Stomach (tissue), 19 donors: ENCODE measurements at regions of chr1 and their contacts with region 1.

Region 1: GRCh38 chr1:111320106-111320879 is 29.6 kb downstream of the CHIA start:
- DNase-seq: no peak
- H3K4me3 ChIP-seq: no peak overlapping the region
- H3K27ac ChIP-seq: no peak overlapping the region
- H3K4me1 ChIP-seq: no peaks in the 10 kb centered on the region
- H3K27me3 ChIP-seq: no peaks in the 10 kb centered on the region
- CTCF ChIP-seq: no peak
- EP300 ChIP-seq: no peak
- POLR2A ChIP-seq: no peak

Region 2: GRCh38 chr1:111242805-111243523 is 77.3 kb before region 1 on chr1:
- intact Hi-C with region 1: loop called (anchors 10 kb)
- DNase-seq: no peak
- H3K4me3 ChIP-seq: no peak overlapping the region
- H3K27ac ChIP-seq: no peak overlapping the region
- H3K4me1 ChIP-seq: no peaks in the 10 kb centered on the region
- H3K27me3 ChIP-seq: no peaks in the 10 kb centered on the region
- CTCF ChIP-seq: no peak
- EP300 ChIP-seq: no peak
- POLR2A ChIP-seq: no peak

Region 3: GRCh38 chr1:111372336-111372965 is 52.2 kb after region 1 on chr1:
- intact Hi-C with region 1: no loop called
- DNase-seq: no peak
- H3K4me3 ChIP-seq: no peak overlapping the region
- H3K27ac ChIP-seq: no peak overlapping the region
- H3K4me1 ChIP-seq: no peaks in the 10 kb centered on the region
- H3K27me3 ChIP-seq: peaks cover 0 to 14% (median 0%) of the 10 kb centered on the region in 3 donors
- CTCF ChIP-seq: no peak
- EP300 ChIP-seq: no peak
- POLR2A ChIP-seq: no peak

Region 4: GRCh38 chr1:111463029-111463683 is 142.9 kb after region 1 on chr1:
- intact Hi-C with region 1: no loop called
- DNase-seq: peak in 1 of 2 donors; percentile 60
- H3K4me3 ChIP-seq: no peak overlapping the region
- H3K27ac ChIP-seq: no peak overlapping the region
- H3K4me1 ChIP-seq: peaks cover 0 to 9% (median 0%) of the 10 kb centered on the region in 4 donors
- H3K27me3 ChIP-seq: no peaks in the 10 kb centered on the region
- CTCF ChIP-seq: no peak
- EP300 ChIP-seq: no peak
- POLR2A ChIP-seq: no peak

Region 5: DNA sequence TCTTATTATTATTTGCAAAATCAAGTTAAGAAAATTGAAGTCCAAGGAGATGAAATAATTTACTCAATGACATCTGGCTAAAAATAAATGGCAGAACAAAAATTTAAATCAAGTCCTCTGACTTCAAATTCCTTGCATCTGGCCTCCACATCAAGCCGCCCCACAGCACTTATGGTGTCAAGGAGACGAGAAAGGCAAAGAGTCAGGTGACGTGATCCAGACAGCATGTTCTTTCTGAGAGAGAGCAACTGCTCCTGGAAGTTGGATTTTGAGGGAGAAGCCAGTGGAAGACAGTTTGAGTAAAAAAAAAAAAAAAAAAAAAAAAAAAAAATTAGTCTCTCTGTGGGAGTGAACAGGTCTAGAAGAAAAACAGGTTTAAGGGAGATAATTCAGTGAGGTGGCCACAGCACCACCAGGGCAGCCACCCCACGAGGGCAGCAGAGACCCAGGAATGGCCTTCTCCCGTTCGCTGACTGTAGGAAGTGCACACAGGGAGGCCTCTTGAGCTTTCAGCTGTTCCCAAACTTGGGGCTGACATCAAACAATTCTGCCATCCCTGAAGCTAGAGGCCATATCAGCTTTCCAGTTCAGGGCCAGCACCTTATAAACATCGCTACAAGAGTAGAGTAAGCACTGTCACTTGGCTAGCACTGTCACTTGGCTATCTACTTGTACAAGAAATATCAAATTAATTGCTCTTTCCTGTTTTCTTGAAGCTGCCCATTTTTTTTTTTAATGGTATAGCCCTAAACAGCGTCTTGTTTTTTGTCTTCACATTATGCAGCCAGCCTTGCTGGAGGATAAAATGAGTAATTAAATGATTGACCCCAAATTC is 161.3 kb after region 1 on chr1:
- intact Hi-C with region 1: no loop called
- DNase-seq: peak; percentile 77 to 94
- H3K4me3 ChIP-seq: no peak overlapping the region
- H3K27ac ChIP-seq: no peak overlapping the region
- H3K4me1 ChIP-seq: peaks cover 0 to 39% (median 8%) of the 10 kb centered on the region in 4 donors
- H3K27me3 ChIP-seq: no peaks in the 10 kb centered on the region
- CTCF ChIP-seq: peak in 5 of 7 experiments; percentile 51 to 74 (median 64)
- EP300 ChIP-seq: no peak
- POLR2A ChIP-seq: no peak

Region 6: DNA sequence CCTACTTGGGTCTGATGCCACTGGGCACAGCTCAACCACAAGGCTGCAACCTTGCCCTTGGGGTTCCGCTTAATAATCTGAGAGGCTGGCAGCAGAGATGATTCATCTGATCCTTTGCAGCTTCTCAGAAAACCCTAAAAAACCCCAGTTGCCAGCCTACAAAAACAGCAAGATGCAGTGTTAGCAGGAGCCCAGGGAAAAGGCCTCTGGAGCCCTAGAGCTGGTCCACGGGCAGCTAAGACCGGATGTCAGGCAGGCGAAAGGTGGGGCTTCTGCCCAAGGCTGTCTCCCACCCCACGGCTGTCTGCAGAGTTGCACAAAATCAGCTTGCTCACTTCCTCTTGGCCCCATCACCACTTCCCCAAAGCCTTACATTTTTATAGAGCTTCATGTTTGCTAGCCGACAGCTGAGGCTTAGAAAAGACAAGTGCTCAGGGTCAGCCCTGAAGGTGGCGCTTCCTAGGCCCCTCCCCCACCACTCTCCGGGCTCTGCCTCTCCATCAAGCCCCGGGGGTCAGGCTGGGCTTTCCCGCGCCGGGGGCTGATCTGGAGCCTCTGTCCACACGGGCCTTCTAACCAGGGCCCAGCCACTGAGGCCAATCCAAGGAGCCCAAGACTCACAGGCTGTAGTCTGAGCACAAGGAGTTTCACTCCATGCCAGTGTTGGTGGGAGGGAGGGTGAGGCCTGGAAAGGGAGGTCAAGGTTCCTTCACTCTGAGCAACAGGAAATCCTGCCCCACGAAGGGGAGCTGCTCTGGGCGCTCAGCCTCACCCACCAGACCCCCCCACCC is 187.3 kb after region 1 on chr1:
- intact Hi-C with region 1: no loop called
- DNase-seq: peak; percentile 57 to 83
- H3K4me3 ChIP-seq: peak overlapping the region; percentile 22 to 37 (median 28)
- H3K27ac ChIP-seq: peak overlapping the region; percentile 87 to 97 (median 91)
- H3K4me1 ChIP-seq: peaks cover 22 to 76% (median 39%) of the 10 kb centered on the region in 4 donors
- H3K27me3 ChIP-seq: no peaks in the 10 kb centered on the region
- CTCF ChIP-seq: no peak
- EP300 ChIP-seq: no peak
- POLR2A ChIP-seq: no peak